ENCODE measurements at regions of chr2 and their contacts with region 1.

Region 1: DNA sequence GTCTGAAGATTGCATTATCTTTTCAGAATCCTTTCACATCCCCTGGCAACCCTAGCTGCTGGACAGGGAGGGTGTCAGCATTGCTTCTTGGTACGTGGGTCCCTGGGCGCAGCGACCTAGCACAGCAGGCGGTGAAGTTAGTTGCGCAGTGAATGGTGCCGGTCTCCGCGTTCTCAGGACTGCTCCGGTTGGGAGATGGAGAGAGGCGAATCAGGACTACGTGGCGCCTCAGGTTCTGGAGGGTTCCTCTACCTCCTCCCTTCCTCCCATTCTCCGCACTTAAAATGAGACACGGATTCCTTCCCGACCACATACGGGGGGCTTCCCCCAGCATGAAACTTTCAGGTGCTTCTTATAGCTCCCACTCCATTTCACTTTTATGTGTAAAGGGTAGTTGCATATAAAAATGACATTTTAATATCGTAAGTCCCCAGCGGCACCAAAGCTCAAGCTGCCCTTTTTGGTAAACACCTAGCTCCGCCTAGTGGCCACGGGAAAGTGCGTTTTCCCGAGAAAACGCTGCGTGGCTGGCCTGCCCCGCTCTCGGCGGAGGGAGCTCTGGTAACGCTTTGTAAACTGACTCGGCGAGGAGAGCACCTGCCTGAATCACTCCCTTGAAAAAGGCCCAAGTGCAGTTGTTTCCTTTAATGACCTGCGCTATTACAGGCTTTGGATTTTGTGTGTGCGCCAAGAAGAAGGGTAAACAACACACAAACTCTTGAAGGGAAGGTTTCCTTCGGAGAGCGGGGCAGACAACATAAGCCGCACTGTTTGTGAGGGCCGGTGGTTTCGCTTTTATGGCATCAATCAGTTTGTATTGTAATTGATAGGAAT is 32.9 kb upstream of the INHBB start:
- DNase-seq: peak; percentile 51
- ATAC-seq: peak; percentile 70
- H3K4me3 Mint-ChIP-seq: peak overlapping the region; percentile 84
- H3K27ac Mint-ChIP-seq: no peak overlapping the region
- H3K4me1 Mint-ChIP-seq: peaks cover 13% of the 10 kb centered on the region
- H3K27me3 Mint-ChIP-seq: peaks cover 6% of the 10 kb centered on the region
- CTCF ChIP-seq: no peak

Region 2: DNA sequence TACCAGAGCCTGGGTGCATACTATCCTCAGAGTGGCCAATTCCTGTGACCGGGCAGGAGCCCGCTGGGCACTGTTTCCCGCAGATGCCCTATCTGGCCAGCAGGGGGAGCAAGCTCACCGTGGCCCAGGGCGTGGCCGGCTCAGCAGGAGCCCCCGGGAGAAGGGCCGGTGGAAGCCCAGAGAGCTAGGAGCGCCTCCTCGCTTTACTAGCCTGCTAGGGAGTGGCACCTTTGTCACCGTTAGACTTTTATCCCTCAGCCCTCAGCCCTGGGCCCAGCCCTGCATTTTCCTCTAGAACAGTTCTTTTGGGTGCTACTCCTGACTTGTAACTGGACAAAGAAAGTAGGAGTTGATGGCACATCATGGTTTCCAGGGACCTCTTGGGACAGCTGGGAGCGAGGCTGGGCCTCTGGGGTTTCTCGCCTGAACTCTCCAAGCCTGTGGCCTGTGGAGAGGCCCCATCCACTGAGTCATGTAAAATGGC is 610.1 kb before region 1 on chr2:
- CTCF ChIA-PET with region 1: interaction called, 13 read pairs
- POLR2A ChIA-PET with region 1: no interaction called
- intact Hi-C with region 1: loop called (anchors 1 kb)
- DNase-seq: peak; percentile 52
- ATAC-seq: peak; percentile 97
- H3K4me3 Mint-ChIP-seq: no peak overlapping the region
- H3K27ac Mint-ChIP-seq: no peak overlapping the region
- H3K4me1 Mint-ChIP-seq: peaks cover 2% of the 10 kb centered on the region
- H3K27me3 Mint-ChIP-seq: peaks cover 6% of the 10 kb centered on the region
- CTCF ChIP-seq: peak; percentile 69

Region 3: GRCh38 chr2:120109186-120110061 is 203.7 kb before region 1 on chr2:
- CTCF ChIA-PET with region 1: interaction called, 32 read pairs
- POLR2A ChIA-PET with region 1: no interaction called
- intact Hi-C with region 1: loop called (anchors 1 kb)
- DNase-seq: no peak
- ATAC-seq: peak; percentile 57
- H3K4me3 Mint-ChIP-seq: peak overlapping the region; percentile 42
- H3K27ac Mint-ChIP-seq: peak overlapping the region; percentile 62
- H3K4me1 Mint-ChIP-seq: peaks cover 17% of the 10 kb centered on the region
- H3K27me3 Mint-ChIP-seq: no peaks in the 10 kb centered on the region
- CTCF ChIP-seq: no peak

Region 4: GRCh38 chr2:120223034-120223912 is 89.8 kb before region 1 on chr2 and contains the start of gene TMEM185B:
- CTCF ChIA-PET with region 1: interaction called, 16 read pairs
- POLR2A ChIA-PET with region 1: interaction called, 3 read pairs
- intact Hi-C with region 1: loop called (anchors 1 kb)
- DNase-seq: peak; percentile 97
- ATAC-seq: peak; percentile 96
- H3K4me3 Mint-ChIP-seq: peak within 1 kb of the TSS; percentile 87
- H3K27ac Mint-ChIP-seq: peak within 1 kb of the TSS; percentile 90
- H3K4me1 Mint-ChIP-seq: peaks cover 56% of the 10 kb centered on the region
- H3K27me3 Mint-ChIP-seq: no peaks in the 10 kb centered on the region
- CTCF ChIP-seq: no peak
- total RNA-seq, gene TMEM185B: 25.6 and 26.8 TPM in 2 replicates

Region 5: GRCh38 chr2:120252225-120253021 is 60.7 kb before region 1 on chr2 and contains the start of gene RALB:
- CTCF ChIA-PET with region 1: interaction called, 14 read pairs
- POLR2A ChIA-PET with region 1: interaction called, 5 read pairs
- intact Hi-C with region 1: loop called (anchors 1 kb)
- DNase-seq: peak; percentile 98
- ATAC-seq: peak; percentile 94
- H3K4me3 Mint-ChIP-seq: peak within 1 kb of the TSS; percentile 99
- H3K27ac Mint-ChIP-seq: peak within 1 kb of the TSS; percentile 94
- H3K4me1 Mint-ChIP-seq: peaks cover 63% of the 10 kb centered on the region
- H3K27me3 Mint-ChIP-seq: peaks cover 3% of the 10 kb centered on the region
- CTCF ChIP-seq: no peak
- total RNA-seq, gene RALB: 29.9 and 33.4 TPM in 2 replicates

Region 6: GRCh38 chr2:120298173-120298835 is 14.8 kb before region 1 on chr2:
- CTCF ChIA-PET with region 1: interaction called, 12 read pairs
- POLR2A ChIA-PET with region 1: interaction called, 3 read pairs
- intact Hi-C with region 1: no loop called
- DNase-seq: no peak
- ATAC-seq: no peak
- H3K4me3 Mint-ChIP-seq: no peak overlapping the region
- H3K27ac Mint-ChIP-seq: no peak overlapping the region
- H3K4me1 Mint-ChIP-seq: peaks cover 16% of the 10 kb centered on the region
- H3K27me3 Mint-ChIP-seq: no peaks in the 10 kb centered on the region
- CTCF ChIP-seq: no peak

Region 7: DNA sequence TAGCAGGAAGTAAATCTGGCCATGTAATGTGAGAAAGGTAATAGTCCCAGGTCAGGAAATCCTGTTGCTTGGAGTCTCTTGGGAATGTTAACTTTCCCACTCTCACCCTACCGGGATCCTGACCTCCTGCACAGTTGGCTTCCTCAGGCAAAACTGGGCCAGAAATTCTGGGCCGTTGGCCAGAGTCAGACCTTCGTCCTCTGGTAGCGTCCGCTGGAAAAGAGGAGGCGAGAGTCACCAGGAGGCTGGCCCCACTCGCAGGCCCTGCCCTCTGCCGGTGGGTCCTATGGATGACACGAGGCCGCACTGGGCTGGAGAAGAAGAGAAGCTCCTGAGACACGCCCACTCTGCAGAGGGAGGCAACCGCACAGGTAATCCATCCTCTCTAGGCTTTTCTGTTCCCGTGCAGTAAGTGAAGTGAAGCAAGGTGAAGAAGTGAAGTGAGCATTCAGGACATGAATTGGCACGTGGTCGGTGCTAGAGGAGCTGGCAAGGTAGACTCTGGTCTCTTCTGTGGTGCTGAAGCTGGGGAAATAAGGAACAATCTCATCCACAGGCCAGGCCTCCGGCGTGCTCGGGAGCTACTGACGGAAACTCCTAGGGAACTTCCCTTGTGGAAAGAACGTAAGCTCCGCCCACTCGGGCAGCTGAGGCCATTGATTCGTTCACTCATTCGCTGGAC is 239.9 kb after region 1 on chr2:
- CTCF ChIA-PET with region 1: no interaction called
- POLR2A ChIA-PET with region 1: no interaction called
- intact Hi-C with region 1: no loop called
- DNase-seq: no peak
- ATAC-seq: no peak
- H3K4me3 Mint-ChIP-seq: no peak overlapping the region
- H3K27ac Mint-ChIP-seq: no peak overlapping the region
- H3K4me1 Mint-ChIP-seq: no peaks in the 10 kb centered on the region
- H3K27me3 Mint-ChIP-seq: peaks cover 9% of the 10 kb centered on the region
- CTCF ChIP-seq: no peak

Measured in activated B cell treated with CpG ODN at 0.5 μM for 24 hours (primary cell).